Colonic mucosa (tissue), 4 donors: ENCODE measurements at regions of chrX and their contacts with region 1.

Region 1: GRCh38 chrX:48493890-48494364 is 14.9 kb upstream of the PORCN start:
- DNase-seq: no peak
- H3K4me3 ChIP-seq: no peak overlapping the region
- H3K27ac ChIP-seq: no peak overlapping the region
- H3K4me1 ChIP-seq: no peaks in the 10 kb centered on the region
- H3K27me3 ChIP-seq: no peaks in the 10 kb centered on the region
- CTCF ChIP-seq: no peak

Region 2: GRCh38 chrX:47976254-47977151 is 517.4 kb before region 1 on chrX:
- intact Hi-C with region 1: no loop called
- DNase-seq: no peak
- H3K4me3 ChIP-seq: no peak overlapping the region
- H3K27ac ChIP-seq: no peak overlapping the region
- H3K4me1 ChIP-seq: no peaks in the 10 kb centered on the region
- H3K27me3 ChIP-seq: no peaks in the 10 kb centered on the region
- CTCF ChIP-seq: no peak

Region 3: GRCh38 chrX:48083212-48083611 is 410.7 kb before region 1 on chrX:
- intact Hi-C with region 1: loop called (anchors 10 kb)
- DNase-seq: peak; percentile 47
- H3K4me3 ChIP-seq: no peak overlapping the region
- H3K27ac ChIP-seq: no peak overlapping the region
- H3K4me1 ChIP-seq: no peaks in the 10 kb centered on the region
- H3K27me3 ChIP-seq: no peaks in the 10 kb centered on the region
- CTCF ChIP-seq: peak; percentile 55